IMR-90 (cell line): ENCODE measurements at regions of chr16 and their contacts with region 1.

Region 1: GRCh38 chr16:2364638-2365210 is 24.2 kb upstream of the ABCA3 start:
- DNase-seq: no peak
- ATAC-seq: no peak
- H3K4me3 ChIP-seq: no peak overlapping the region
- H3K27ac ChIP-seq: no peak overlapping the region
- H3K4me1 ChIP-seq: peaks cover 1% of the 10 kb centered on the region; the same call in 1 of the 2 replicates
- H3K27me3 ChIP-seq: peaks cover 25% of the 10 kb centered on the region
- CTCF ChIP-seq: no peak
- POLR2A ChIP-seq: no peak
- RAD21 ChIP-seq: no peak

Region 2: GRCh38 chr16:2415085-2415484 is 50.4 kb after region 1 on chr16:
- CTCF ChIA-PET with region 1: no interaction called
- POLR2A ChIA-PET with region 1: no interaction called
- dilution Hi-C with region 1: no loop called
- in situ Hi-C with region 1: no loop called
- intact Hi-C with region 1: loop called (anchors 5 kb)
- DNase-seq: no peak
- ATAC-seq: no peak
- H3K4me3 ChIP-seq: no peak overlapping the region
- H3K27ac ChIP-seq: no peak overlapping the region
- H3K4me1 ChIP-seq: peaks cover 4% of the 10 kb centered on the region
- H3K27me3 ChIP-seq: peaks cover 17% of the 10 kb centered on the region
- CTCF ChIP-seq: no peak
- POLR2A ChIP-seq: no peak
- RAD21 ChIP-seq: no peak